Mammary epithelial cell (primary cell): ENCODE measurements at regions of chr11 and their contacts with region 1.

Region 1: DNA sequence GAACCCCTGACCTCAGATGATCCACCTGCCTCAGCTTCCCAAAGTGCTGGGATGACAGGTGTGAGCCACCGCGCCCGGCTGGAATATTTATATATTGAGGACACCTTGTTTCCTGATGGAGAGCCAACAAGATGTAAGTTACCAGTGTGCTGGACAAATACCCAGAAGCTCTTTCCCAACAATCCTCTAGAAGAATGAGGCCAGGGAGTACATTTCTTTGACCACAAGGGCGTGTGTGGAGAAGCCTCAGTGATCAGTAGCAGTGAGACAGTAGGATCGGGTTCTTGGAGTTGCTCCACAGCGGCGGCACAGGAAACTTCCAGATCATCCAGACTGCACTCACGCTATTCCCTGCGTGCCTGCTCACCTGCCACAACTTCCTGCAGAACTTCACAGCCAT is 10.3 kb upstream of the POLA2 start:
- DNase-seq: no peak
- H3K4me3 ChIP-seq: no peak overlapping the region
- H3K27ac ChIP-seq: no peak overlapping the region
- H3K4me1 ChIP-seq: no peaks in the 10 kb centered on the region
- H3K27me3 ChIP-seq: no peaks in the 10 kb centered on the region
- CTCF ChIP-seq: no peak

Region 2: GRCh38 chr11:65111744-65112414 is 139.6 kb before region 1 on chr11 and contains the start of gene TM7SF2:
- CTCF ChIA-PET with region 1: no interaction called
- dilution Hi-C with region 1: loop called (anchors 10 kb)
- in situ Hi-C with region 1: no loop called
- intact Hi-C with region 1: loop called (anchors 1 kb)
- DNase-seq: peak; percentile 93
- H3K4me3 ChIP-seq: peak within 1 kb of the TSS; percentile 45 to 51 (median 49)
- H3K27ac ChIP-seq: no peak within 1 kb of the TSS
- H3K4me1 ChIP-seq: peaks cover 38% of the 10 kb centered on the region
- H3K27me3 ChIP-seq: no peaks in the 10 kb centered on the region
- CTCF ChIP-seq: no peak
- total RNA-seq, gene TM7SF2: 8.7 to 10.1 TPM

Region 3: DNA sequence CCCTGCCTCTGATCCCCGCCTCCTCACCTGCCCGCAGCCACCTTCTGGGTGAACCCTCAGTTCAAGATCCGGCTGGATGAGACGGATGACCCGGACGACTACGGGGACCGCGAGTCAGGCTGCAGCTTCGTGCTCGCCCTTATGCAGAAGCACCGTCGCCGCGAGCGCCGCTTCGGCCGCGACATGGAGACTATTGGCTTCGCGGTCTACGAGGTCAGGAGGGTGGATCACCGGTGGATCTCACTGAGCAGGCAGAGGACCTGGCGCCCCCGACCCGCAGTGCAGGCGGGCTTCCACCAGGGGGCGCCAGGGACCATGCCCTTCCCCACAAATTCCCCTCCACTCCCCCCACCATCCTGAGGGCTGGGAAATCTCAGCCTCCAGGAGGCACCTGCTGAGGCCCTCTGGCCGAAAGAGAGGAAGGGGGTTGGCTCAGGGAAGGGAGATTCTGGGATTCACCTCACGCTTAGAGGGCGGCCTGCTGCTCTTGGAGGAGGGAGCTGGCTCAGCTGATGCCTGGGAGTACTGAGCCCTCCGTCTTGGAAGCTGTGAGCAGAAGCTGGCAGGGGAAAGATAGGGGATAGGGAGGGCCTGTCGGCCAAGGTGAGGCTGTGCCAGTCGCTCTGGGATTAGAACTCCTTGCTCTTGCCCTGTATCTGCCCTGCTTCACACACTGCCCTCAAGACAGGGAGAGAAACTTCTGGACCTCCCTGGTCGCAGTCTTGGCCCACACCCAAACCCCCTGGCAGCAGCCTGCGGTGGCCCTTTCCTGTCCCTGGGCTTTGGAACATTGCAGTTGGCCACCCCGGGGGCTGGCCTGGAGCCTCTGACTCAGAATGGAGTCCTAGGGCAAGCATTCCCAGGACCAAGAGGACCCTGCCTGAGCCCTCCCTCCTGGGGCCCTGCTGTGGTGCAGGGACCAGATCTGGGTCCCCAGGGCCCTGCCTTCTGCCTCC is 46.6 kb before region 1 on chr11:
- CTCF ChIA-PET with region 1: no interaction called
- dilution Hi-C with region 1: loop called (anchors 5 kb)
- in situ Hi-C with region 1: no loop called
- intact Hi-C with region 1: loop called (anchors 1 kb)
- DNase-seq: no peak
- H3K4me3 ChIP-seq: no peak overlapping the region
- H3K27ac ChIP-seq: no peak overlapping the region
- H3K4me1 ChIP-seq: no peaks in the 10 kb centered on the region
- H3K27me3 ChIP-seq: no peaks in the 10 kb centered on the region
- CTCF ChIP-seq: peak; percentile 54 to 76

Region 4: GRCh38 chr11:65225279-65226102 is 26.0 kb before region 1 on chr11:
- CTCF ChIA-PET with region 1: interaction called, 7 read pairs
- dilution Hi-C with region 1: no loop called
- in situ Hi-C with region 1: no loop called
- intact Hi-C with region 1: loop called (anchors 1 kb)
- DNase-seq: peak; percentile 77
- H3K4me3 ChIP-seq: peak overlapping the region; percentile 39 to 46 (median 45)
- H3K27ac ChIP-seq: peak overlapping the region; percentile 45
- H3K4me1 ChIP-seq: peaks cover 19% of the 10 kb centered on the region
- H3K27me3 ChIP-seq: no peaks in the 10 kb centered on the region
- CTCF ChIP-seq: peak; percentile 21 to 62

Region 5: DNA sequence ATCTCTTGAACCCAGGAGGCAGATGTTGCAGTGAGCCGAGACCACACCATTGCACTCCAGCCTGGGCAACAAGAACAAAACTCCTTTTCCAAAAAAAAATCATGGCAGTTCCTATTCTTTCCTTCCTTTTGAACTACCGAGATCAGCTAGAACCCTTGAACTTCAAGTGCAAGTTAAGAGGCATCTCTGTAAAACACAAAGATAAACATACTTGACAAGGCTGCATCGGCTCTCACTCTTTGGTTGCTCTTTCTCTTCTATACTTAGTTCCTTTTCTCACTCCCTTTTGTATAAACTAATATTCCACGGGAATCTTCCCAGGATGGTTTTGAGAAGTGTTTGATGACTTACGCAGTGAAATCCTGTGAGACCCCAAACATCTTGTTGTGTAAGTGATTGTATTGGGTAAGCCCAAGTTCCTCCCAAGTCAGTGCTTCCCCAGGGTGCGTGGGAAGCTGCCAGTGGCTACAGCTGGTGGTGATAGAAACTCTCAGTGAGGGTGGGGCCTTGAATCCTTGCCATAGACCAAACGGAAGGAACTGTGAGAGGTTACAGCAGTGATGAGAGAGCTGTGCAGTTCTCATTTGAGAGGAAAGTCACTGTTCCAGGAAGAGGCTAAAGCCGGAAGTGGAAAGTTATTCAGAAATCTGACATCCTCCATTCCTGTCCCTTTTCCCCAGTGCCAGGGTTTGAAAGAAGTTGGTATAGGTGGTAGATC is 39.1 kb after region 1 on chr11:
- CTCF ChIA-PET with region 1: no interaction called
- dilution Hi-C with region 1: no loop called
- in situ Hi-C with region 1: no loop called
- intact Hi-C with region 1: no loop called
- DNase-seq: peak; percentile 63
- H3K4me3 ChIP-seq: no peak overlapping the region
- H3K27ac ChIP-seq: no peak overlapping the region
- H3K4me1 ChIP-seq: no peaks in the 10 kb centered on the region
- H3K27me3 ChIP-seq: no peaks in the 10 kb centered on the region
- CTCF ChIP-seq: no peak